Esophagus squamous epithelium (tissue), 5 donors: ENCODE measurements at regions of chr17 and their contacts with region 1.

Region 1: GRCh38 chr17:69232650-69233049 is 4.0 kb upstream of the ABCA10 start:
- DNase-seq: no peak
- H3K4me3 ChIP-seq: no peak overlapping the region
- H3K27ac ChIP-seq: no peak overlapping the region
- H3K4me1 ChIP-seq: peaks cover 0 to 10% (median 0%) of the 10 kb centered on the region in 3 donors
- H3K27me3 ChIP-seq: no peaks in the 10 kb centered on the region
- CTCF ChIP-seq: no peak
- POLR2A ChIP-seq: no peak

Region 2: DNA sequence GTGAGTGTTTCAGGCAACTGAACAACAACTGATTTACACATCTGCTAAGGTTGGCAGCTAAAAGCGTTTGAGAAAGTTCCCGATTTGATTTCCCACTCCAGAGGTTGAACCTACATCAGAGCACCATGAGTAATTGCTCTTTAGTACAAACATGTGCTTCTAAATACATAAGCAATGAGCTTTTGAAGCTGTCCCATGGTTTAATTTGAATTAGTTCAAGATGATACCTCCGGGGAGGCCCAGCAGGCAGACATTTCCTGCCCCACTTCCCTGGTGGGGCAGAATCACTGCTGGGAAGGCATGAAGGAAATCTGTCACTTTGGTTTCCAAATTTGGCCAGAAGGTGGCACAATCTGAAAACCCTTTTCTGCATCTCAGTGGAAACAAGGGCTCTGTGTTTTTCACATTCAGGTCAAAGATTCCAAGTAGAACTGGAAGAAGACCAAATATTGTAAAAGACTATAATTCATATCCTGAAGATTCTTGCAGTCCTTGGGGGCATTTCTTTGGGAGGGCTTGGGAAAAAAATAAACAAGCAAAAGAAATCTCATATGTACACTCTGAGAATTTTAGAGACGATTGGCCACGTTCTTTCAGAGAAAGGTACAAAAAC is 455.3 kb before region 1 on chr17:
- intact Hi-C with region 1: loop called (anchors 5 kb)
- DNase-seq: no peak
- H3K4me3 ChIP-seq: no peak overlapping the region
- H3K27ac ChIP-seq: peak overlapping the region in 3 of 4 donors; percentile 36 to 70 (median 62)
- H3K4me1 ChIP-seq: peaks cover 0 to 37% (median 5%) of the 10 kb centered on the region in 3 donors
- H3K27me3 ChIP-seq: no peaks in the 10 kb centered on the region
- CTCF ChIP-seq: peak; percentile 42 to 73 (median 67)
- POLR2A ChIP-seq: no peak

Region 3: DNA sequence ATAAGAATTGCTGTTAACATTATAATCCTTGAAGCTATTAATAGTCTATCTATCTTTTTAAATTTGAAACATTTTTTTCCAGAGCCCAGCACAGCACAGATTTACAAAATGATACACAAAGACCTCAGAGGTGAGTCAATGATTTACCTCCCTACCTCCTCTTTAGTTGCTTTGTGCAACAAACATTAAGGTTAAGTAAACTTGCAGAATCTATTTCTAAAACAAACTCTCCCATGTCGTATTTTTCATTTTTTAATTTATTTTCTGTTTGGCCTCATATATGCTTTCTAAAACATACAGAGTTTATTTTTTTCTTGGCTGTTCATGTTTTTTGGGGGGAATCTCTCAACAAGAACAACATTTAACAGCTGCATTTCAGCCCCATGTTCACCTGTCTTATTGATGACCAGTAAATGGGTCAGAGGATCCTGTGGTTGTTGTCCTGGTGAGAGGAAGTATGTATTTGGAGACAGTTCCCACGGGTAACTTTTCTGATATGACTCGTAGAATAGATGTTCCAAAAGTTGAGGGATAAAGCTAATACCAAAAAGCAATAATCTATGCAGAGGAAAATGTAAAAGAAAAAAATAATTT is 214.5 kb before region 1 on chr17:
- intact Hi-C with region 1: no loop called
- DNase-seq: no peak
- H3K4me3 ChIP-seq: no peak overlapping the region
- H3K27ac ChIP-seq: no peak overlapping the region
- H3K4me1 ChIP-seq: no peaks in the 10 kb centered on the region
- H3K27me3 ChIP-seq: no peaks in the 10 kb centered on the region
- CTCF ChIP-seq: no peak
- POLR2A ChIP-seq: no peak

Region 4: GRCh38 chr17:69067274-69068047 is 165.2 kb before region 1 on chr17:
- intact Hi-C with region 1: no loop called
- DNase-seq: no peak
- H3K4me3 ChIP-seq: no peak overlapping the region
- H3K27ac ChIP-seq: no peak overlapping the region
- H3K4me1 ChIP-seq: no peaks in the 10 kb centered on the region
- H3K27me3 ChIP-seq: no peaks in the 10 kb centered on the region
- CTCF ChIP-seq: no peak
- POLR2A ChIP-seq: no peak

Region 5: GRCh38 chr17:69175812-69176795 is 56.5 kb before region 1 on chr17:
- intact Hi-C with region 1: no loop called
- DNase-seq: no peak
- H3K4me3 ChIP-seq: no peak overlapping the region
- H3K27ac ChIP-seq: no peak overlapping the region
- H3K4me1 ChIP-seq: peaks cover 3 to 21% (median 4%) of the 10 kb centered on the region in 3 donors
- H3K27me3 ChIP-seq: no peaks in the 10 kb centered on the region
- CTCF ChIP-seq: no peak
- POLR2A ChIP-seq: no peak